WTC11 (cell line): ENCODE measurements at regions of chr11 and their contacts with region 1.

Region 1: GRCh38 chr11:62340269-62340901 is 3.1 kb downstream of the ASRGL1 start:
- DNase-seq: peak; percentile 69
- ATAC-seq: peak; percentile 50
- H3K4me3 Mint-ChIP-seq: no peak overlapping the region
- H3K27ac Mint-ChIP-seq: no peak overlapping the region
- H3K4me1 Mint-ChIP-seq: peaks cover 26% of the 10 kb centered on the region
- H3K27me3 Mint-ChIP-seq: peaks cover 25% of the 10 kb centered on the region
- CTCF ChIP-seq: peak; percentile 43

Region 2: DNA sequence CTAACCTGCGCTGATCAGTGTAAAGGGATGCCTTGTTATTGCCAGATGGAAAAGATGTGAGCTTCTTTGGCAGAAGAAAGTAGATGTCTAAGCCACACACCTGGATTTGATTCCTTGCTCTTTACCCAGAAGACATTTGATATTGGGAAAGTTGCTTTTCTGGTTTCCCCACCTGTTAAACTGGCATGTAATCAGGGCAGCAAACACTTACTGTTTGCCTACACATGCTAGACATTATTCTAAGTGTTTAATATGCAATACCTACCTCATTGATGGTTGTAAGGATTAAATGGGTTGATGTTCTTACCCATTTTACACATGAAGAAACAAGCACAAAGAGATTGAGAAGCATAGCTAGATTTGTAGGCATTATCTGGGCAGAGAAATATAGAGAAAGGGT is 13.5 kb after region 1 on chr11:
- CTCF ChIA-PET with region 1: interaction called, 11 read pairs
- POLR2A ChIA-PET with region 1: no interaction called
- DNase-seq: no peak
- ATAC-seq: no peak
- H3K4me3 Mint-ChIP-seq: no peak overlapping the region
- H3K27ac Mint-ChIP-seq: no peak overlapping the region
- H3K4me1 Mint-ChIP-seq: peaks cover 58% of the 10 kb centered on the region
- H3K27me3 Mint-ChIP-seq: no peaks in the 10 kb centered on the region
- CTCF ChIP-seq: no peak

Region 3: GRCh38 chr11:62372871-62373270 is 32.5 kb after region 1 on chr11:
- CTCF ChIA-PET with region 1: interaction called, 18 read pairs
- POLR2A ChIA-PET with region 1: no interaction called
- DNase-seq: no peak
- ATAC-seq: no peak
- H3K4me3 Mint-ChIP-seq: no peak overlapping the region
- H3K27ac Mint-ChIP-seq: no peak overlapping the region; the same call in 1 of the 2 replicates
- H3K4me1 Mint-ChIP-seq: peaks cover 2% of the 10 kb centered on the region; the same call in 1 of the 2 replicates
- H3K27me3 Mint-ChIP-seq: no peaks in the 10 kb centered on the region
- CTCF ChIP-seq: no peak